Transverse colon (tissue), 4 donors: ENCODE measurements at regions of chr2 and their contacts with region 1.

Region 1: GRCh38 chr2:16507655-16508489 is 157.8 kb downstream of the CYRIA start:
- DNase-seq: peak; percentile 43
- H3K4me3 ChIP-seq: peak overlapping the region; percentile 23 to 51 (median 30)
- H3K27ac ChIP-seq: no peak overlapping the region
- H3K4me1 ChIP-seq: peaks cover 0 to 10% (median 9%) of the 10 kb centered on the region in 4 donors
- H3K27me3 ChIP-seq: peaks cover 43% of the 10 kb centered on the region
- CTCF ChIP-seq: peak; percentile 36 to 74 (median 65)
- EP300 ChIP-seq: no peak
- POLR2A ChIP-seq: no peak

Region 2: DNA sequence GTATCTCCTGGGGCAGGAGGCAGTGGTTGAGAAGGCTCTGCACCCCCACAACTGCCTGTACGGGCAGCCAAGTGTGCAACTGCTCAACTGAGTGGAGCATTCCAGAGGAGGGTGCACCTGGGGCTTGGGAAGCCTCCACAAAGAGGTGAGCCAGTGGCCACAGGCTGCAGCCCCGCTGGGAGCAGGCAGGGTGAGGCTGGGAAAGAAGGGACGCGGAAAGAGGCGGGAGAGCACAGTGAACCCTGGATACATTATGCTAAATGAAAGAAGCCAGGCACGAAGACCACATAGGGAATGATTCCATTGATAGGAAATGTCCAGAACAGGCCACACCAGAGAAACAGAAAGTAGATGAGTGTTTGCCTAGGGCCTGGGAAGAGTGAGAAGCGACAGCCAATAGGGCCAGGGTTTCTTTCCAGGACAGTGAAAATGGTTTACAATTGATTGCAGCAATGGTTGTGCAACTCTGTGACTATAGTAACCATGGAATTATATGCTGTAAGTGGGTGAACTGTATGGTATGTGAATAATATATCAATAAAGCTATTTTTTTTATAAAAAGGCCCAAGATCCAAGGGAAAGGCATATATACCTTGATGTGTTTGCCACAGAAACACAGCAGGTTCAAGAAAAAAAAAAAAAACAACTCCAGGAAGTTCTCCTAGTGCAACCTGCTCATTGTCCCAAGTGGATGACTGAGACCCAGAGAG is 833.8 kb before region 1 on chr2:
- in situ Hi-C with region 1: loop called in 1 of 4 experiments (anchors 25 kb)
- intact Hi-C with region 1: no loop called
- DNase-seq: no peak
- H3K4me3 ChIP-seq: no peak overlapping the region
- H3K27ac ChIP-seq: no peak overlapping the region
- H3K4me1 ChIP-seq: peaks cover 0 to 10% (median 3%) of the 10 kb centered on the region in 4 donors
- H3K27me3 ChIP-seq: no peaks in the 10 kb centered on the region
- CTCF ChIP-seq: no peak
- EP300 ChIP-seq: no peak
- POLR2A ChIP-seq: no peak

Region 3: GRCh38 chr2:16635791-16636699 is 128.2 kb after region 1 on chr2:
- in situ Hi-C with region 1: no loop called
- intact Hi-C with region 1: no loop called
- DNase-seq: no peak
- H3K4me3 ChIP-seq: no peak overlapping the region
- H3K27ac ChIP-seq: no peak overlapping the region
- H3K4me1 ChIP-seq: peaks cover 0 to 14% (median 8%) of the 10 kb centered on the region in 4 donors
- H3K27me3 ChIP-seq: no peaks in the 10 kb centered on the region
- CTCF ChIP-seq: no peak
- EP300 ChIP-seq: no peak
- POLR2A ChIP-seq: no peak